CD8-positive, alpha-beta T cell (primary cell): ENCODE measurements at regions of chr2 and their contacts with region 1.

Region 1: GRCh38 chr2:160464996-160465395 is 28.6 kb downstream of the RBMS1 start:
- DNase-seq: no peak
- ATAC-seq: no peak
- H3K4me3 ChIP-seq: no peak overlapping the region
- H3K4me3 Mint-ChIP-seq: no peak overlapping the region
- H3K27ac ChIP-seq: no peak overlapping the region
- H3K27ac Mint-ChIP-seq: no peak overlapping the region
- H3K4me1 ChIP-seq: no peaks in the 10 kb centered on the region
- H3K4me1 Mint-ChIP-seq: peaks cover 69% of the 10 kb centered on the region
- H3K27me3 ChIP-seq: no peaks in the 10 kb centered on the region
- H3K27me3 Mint-ChIP-seq: no peaks in the 10 kb centered on the region
- CTCF ChIP-seq: no peak

Region 2: GRCh38 chr2:160652236-160652635 is 187.2 kb after region 1 on chr2:
- CTCF ChIA-PET with region 1: no interaction called
- POLR2A ChIA-PET with region 1: no interaction called
- intact Hi-C with region 1: loop called in 1 of 2 experiments (anchors 5 kb)
- DNase-seq: peak; percentile 12 to 79 (median 66)
- ATAC-seq: peak; percentile 99
- H3K4me3 ChIP-seq: peak overlapping the region in 1 of 2 experiments; percentile 7
- H3K4me3 Mint-ChIP-seq: peak overlapping the region; percentile 42
- H3K27ac ChIP-seq: no peak overlapping the region
- H3K27ac Mint-ChIP-seq: peak overlapping the region; percentile 5
- H3K4me1 ChIP-seq: peaks cover 20% of the 10 kb centered on the region
- H3K4me1 Mint-ChIP-seq: peaks cover 22% of the 10 kb centered on the region
- H3K27me3 ChIP-seq: no peaks in the 10 kb centered on the region
- H3K27me3 Mint-ChIP-seq: peaks cover 13% of the 10 kb centered on the region
- CTCF ChIP-seq: no peak